Psoas muscle (tissue), 8 donors: ENCODE measurements at regions of chr14 and their contacts with region 1.

Region 1: GRCh38 chr14:75022655-75023054 is 19.9 kb downstream of the EIF2B2 start:
- DNase-seq: peak; percentile 43 to 84
- ATAC-seq: peak; percentile 98 to 100 (median 99)
- H3K4me3 ChIP-seq: no peak overlapping the region
- H3K27ac ChIP-seq: peak overlapping the region; percentile 46
- H3K4me1 ChIP-seq: peaks cover 12% of the 10 kb centered on the region
- H3K27me3 ChIP-seq: no peaks in the 10 kb centered on the region
- CTCF ChIP-seq: peak; percentile 51

Region 2: GRCh38 chr14:74913986-74914573 is 108.6 kb before region 1 on chr14:
- intact Hi-C with region 1: loop called in 1 of 2 experiments (anchors 10 kb)
- DNase-seq: peak; percentile 77 to 87
- ATAC-seq: peak; percentile 45 to 72 (median 67)
- H3K4me3 ChIP-seq: no peak overlapping the region
- H3K27ac ChIP-seq: peak overlapping the region; percentile 3
- H3K4me1 ChIP-seq: peaks cover 35% of the 10 kb centered on the region
- H3K27me3 ChIP-seq: no peaks in the 10 kb centered on the region
- CTCF ChIP-seq: peak; percentile 81